GM12878 (cell line): ENCODE measurements at regions of chr17 and their contacts with region 1.

Region 1: DNA sequence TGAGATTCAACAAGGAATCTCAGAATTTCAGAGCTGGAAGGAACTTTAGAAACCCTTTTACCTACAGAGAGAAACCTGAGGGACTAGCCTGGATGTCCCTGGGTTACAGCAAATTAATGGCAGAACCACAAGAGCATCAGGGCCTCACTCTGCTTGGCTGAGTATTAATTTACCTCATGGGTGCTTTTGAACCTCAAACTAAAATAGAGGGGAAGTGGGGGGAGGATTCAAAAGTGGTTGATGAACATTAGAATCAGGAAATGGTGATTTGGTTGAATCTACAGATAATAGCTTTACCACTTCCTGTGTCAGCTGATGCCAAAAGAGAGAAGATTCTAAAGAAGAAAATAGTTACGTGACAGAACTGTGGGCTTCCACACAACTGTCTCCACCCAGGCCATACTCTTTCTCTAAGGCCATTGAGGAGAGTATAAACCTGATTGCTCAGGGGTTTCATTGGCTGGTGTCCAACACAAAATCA is 11.3 kb upstream of the SKAP1 start:
- DNase-seq: peak; percentile 96
- ATAC-seq: peak; percentile 86
- H3K4me3 ChIP-seq: peak overlapping the region; percentile 25; the same call in 1 of the 2 replicates
- H3K27ac ChIP-seq: peak overlapping the region; percentile 94
- H3K4me1 ChIP-seq: peaks cover 64% of the 10 kb centered on the region
- H3K27me3 ChIP-seq: no peaks in the 10 kb centered on the region
- CTCF ChIP-seq: no peak
- EP300 ChIP-seq: peak; percentile 85 to 91
- POLR2A ChIP-seq: no peak; the same call in 1 of the 2 replicates
- RAD21 ChIP-seq: 0 out of 2 replicates have a peak, but pooled peaks have one; percentile 1

Region 2: DNA sequence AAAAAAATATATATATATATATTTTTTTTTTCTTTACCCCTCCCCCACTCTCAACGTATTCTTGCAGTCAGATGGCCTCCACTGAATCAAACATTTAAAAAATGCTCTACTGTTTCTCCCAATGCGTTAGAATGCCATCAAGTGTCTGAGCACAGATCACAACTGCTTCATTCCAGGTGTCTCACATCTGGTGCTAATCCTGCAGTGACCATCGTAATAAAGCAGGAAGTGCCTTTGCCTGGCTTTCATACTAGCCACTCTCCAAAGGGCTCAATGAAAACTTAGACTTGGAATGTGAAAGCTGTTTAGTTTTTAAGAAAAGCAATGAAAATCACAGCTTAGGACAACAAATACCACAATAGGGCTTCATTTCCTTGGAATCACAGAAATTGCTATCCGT is 48.4 kb before region 1 on chr17:
- CTCF ChIA-PET with region 1: no interaction called
- POLR2A ChIA-PET with region 1: no interaction called
- RAD21 ChIA-PET with region 1: interaction called, 10 read pairs
- SMC1A ChIA-PET with region 1: interaction called, 6 read pairs
- in situ Hi-C with region 1: no loop called
- intact Hi-C with region 1: no loop called
- DNase-seq: no peak
- ATAC-seq: no peak
- H3K4me3 ChIP-seq: no peak overlapping the region
- H3K27ac ChIP-seq: no peak overlapping the region
- H3K4me1 ChIP-seq: peaks cover 3% of the 10 kb centered on the region; the same call in 1 of the 2 replicates
- H3K27me3 ChIP-seq: no peaks in the 10 kb centered on the region
- CTCF ChIP-seq: no peak
- EP300 ChIP-seq: no peak
- POLR2A ChIP-seq: no peak
- RAD21 ChIP-seq: no peak

Region 3: DNA sequence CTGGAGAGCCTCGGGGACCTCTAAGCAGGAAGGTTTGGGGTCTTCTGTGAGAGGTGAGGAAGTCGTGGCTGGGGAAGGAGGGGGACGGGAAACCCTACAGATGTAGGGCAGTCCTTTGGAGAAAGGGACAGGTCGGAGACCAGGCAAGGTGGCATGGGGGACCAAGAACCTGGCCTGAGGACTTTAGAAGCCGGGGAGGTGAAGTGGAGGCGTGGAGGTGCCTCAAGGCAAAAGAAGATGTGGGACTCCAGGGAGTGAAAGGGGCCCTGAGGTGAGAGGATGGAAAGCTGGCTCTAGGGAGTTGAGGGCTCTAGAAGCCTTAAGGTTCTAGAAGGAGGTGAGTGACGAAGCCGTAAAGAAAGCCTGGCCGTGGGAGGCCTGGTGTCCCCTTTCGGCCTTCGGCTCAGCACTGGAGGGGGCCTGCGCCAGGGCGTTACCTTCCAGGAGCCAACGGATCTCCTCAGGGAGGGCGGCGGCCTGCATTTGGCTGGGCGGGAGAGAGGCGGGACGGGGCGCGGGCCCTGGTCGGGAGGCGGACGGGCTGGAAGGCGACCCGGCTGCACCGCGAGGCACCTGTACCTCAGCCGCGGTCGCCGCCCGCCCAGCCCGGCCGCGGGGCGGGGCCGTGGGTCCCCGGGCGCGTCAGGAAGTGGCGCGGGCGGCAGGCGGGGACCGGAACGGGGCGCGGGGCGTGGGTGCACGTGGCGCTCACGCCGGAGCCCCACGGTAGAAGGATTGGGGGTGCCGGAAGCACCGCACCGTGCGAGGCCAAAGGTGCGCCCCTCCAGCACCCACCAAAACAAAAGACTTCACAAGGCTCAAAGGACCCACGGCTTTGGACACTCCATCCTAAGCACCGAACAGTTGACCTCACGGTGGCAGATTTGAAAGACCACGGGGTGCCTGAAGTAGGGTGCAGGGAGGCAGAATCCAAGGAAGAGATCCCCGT is 11.4 kb before region 1 on chr17 and contains the start of gene SKAP1:
- CTCF ChIA-PET with region 1: interaction called, 23 read pairs
- POLR2A ChIA-PET with region 1: interaction called, 31 read pairs
- RAD21 ChIA-PET with region 1: interaction called, 30 read pairs
- SMC1A ChIA-PET with region 1: interaction called, 31 read pairs
- in situ Hi-C with region 1: no loop called
- intact Hi-C with region 1: no loop called
- DNase-seq: no peak
- ATAC-seq: peak; percentile 84
- H3K4me3 ChIP-seq: peak within 1 kb of the TSS; percentile 94
- H3K27ac ChIP-seq: peak within 1 kb of the TSS; percentile 74
- H3K4me1 ChIP-seq: peaks cover 8% of the 10 kb centered on the region
- H3K27me3 ChIP-seq: no peaks in the 10 kb centered on the region
- CTCF ChIP-seq: no peak
- EP300 ChIP-seq: no peak
- POLR2A ChIP-seq: peak; percentile 92
- RAD21 ChIP-seq: no peak
- polyA plus RNA-seq, gene SKAP1: 17.1 to 34.2 TPM

Region 4: GRCh38 chr17:48457080-48457836 is 16.0 kb after region 1 on chr17:
- CTCF ChIA-PET with region 1: interaction called, 28 read pairs
- POLR2A ChIA-PET with region 1: interaction called, 30 read pairs
- RAD21 ChIA-PET with region 1: interaction called, 47 read pairs
- SMC1A ChIA-PET with region 1: interaction called, 120 read pairs
- in situ Hi-C with region 1: no loop called
- intact Hi-C with region 1: no loop called
- DNase-seq: no peak
- ATAC-seq: peak; percentile 93
- H3K4me3 ChIP-seq: peak overlapping the region; percentile 2; the same call in 1 of the 2 replicates
- H3K27ac ChIP-seq: no peak overlapping the region
- H3K4me1 ChIP-seq: peaks cover 34% of the 10 kb centered on the region
- H3K27me3 ChIP-seq: no peaks in the 10 kb centered on the region
- CTCF ChIP-seq: peak; percentile 96; a peak in 5 of 6 replicates
- EP300 ChIP-seq: no peak
- POLR2A ChIP-seq: no peak
- RAD21 ChIP-seq: peak; percentile 96

Region 5: DNA sequence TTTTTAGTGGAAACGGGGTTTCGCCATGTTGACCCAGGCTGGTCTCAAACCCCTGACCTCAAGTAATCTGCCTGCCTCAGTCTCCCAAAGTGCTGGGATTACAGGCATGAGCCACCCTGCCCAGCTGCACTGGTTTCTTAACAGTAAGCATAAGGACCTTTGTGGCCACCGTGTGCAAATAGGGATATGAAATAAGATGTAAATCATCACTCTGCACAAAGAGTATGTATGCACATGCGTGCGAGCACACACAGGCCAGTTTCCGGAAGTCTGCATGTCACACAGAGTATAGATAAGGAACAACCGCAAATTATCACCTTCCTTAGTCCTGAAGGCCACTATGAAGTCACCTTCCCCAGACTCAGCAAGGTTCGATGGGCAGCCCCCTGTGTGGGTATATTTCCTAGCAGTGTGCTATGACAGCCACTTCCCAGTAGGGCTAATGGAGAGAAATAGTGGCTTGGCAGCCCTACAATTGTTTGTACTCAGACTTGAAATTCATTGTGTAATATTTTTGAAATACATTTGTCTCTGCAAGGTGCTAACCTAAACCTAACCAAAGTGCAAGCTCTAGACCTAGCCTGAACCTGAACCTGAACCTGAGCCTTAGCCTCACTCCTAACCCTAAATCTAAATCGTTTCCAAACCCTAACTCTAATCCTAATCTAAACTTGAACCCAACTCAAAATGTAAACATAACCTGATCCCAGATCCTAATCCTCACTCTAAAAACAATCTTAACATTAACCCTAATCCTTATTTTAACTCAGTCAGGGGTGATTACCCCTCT is 37.1 kb after region 1 on chr17:
- CTCF ChIA-PET with region 1: no interaction called
- POLR2A ChIA-PET with region 1: interaction called, 4 read pairs
- RAD21 ChIA-PET with region 1: interaction called, 4 read pairs
- SMC1A ChIA-PET with region 1: interaction called, 17 read pairs
- in situ Hi-C with region 1: no loop called
- intact Hi-C with region 1: no loop called
- DNase-seq: peak; percentile 84
- ATAC-seq: peak; percentile 98
- H3K4me3 ChIP-seq: no peak overlapping the region
- H3K27ac ChIP-seq: peak overlapping the region; percentile 51
- H3K4me1 ChIP-seq: peaks cover 20% of the 10 kb centered on the region
- H3K27me3 ChIP-seq: no peaks in the 10 kb centered on the region
- CTCF ChIP-seq: peak in 2 of 3 experiments; percentile 19 to 43; a peak in 1 of 6 replicates
- EP300 ChIP-seq: peak; percentile 88 to 91; a peak in 3 of 4 replicates
- POLR2A ChIP-seq: no peak
- RAD21 ChIP-seq: no peak

Region 6: GRCh38 chr17:48576479-48577309 is 135.4 kb after region 1 on chr17:
- CTCF ChIA-PET with region 1: no interaction called
- POLR2A ChIA-PET with region 1: no interaction called
- RAD21 ChIA-PET with region 1: no interaction called
- SMC1A ChIA-PET with region 1: no interaction called
- in situ Hi-C with region 1: no loop called
- intact Hi-C with region 1: no loop called
- DNase-seq: no peak
- ATAC-seq: no peak
- H3K4me3 ChIP-seq: peak overlapping the region; percentile 73
- H3K27ac ChIP-seq: no peak overlapping the region
- H3K4me1 ChIP-seq: peaks cover 20% of the 10 kb centered on the region
- H3K27me3 ChIP-seq: no peaks in the 10 kb centered on the region
- CTCF ChIP-seq: no peak
- EP300 ChIP-seq: no peak
- POLR2A ChIP-seq: no peak
- RAD21 ChIP-seq: no peak